ENCODE measurements at regions of chr9 and their contacts with region 1.

Region 1: DNA sequence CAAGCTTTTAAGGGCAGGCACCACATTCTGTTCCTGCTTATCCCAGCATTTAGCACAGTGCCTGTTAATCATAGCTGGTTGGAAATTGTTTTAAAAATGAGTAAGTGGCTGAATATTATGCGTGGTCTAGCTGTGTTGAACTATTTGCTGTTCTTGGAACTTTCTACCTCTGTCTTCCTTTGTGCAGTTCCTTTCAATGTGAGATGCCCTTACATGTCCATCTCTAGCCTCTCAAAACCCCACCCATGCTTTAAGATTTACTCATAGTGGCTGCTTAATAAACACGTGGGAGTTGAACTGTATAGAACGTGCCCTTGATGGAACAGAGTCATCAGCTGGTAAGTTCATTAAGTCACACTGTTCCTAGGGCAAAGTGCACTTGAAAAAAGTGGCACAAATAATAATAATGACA is 34.5 kb downstream of the C9orf57 start:
- DNase-seq: no peak
- H3K4me3 Mint-ChIP-seq: no peak overlapping the region
- H3K27ac Mint-ChIP-seq: no peak overlapping the region
- H3K4me1 Mint-ChIP-seq: peaks cover 5% of the 10 kb centered on the region
- H3K27me3 Mint-ChIP-seq: no peaks in the 10 kb centered on the region

Region 2: DNA sequence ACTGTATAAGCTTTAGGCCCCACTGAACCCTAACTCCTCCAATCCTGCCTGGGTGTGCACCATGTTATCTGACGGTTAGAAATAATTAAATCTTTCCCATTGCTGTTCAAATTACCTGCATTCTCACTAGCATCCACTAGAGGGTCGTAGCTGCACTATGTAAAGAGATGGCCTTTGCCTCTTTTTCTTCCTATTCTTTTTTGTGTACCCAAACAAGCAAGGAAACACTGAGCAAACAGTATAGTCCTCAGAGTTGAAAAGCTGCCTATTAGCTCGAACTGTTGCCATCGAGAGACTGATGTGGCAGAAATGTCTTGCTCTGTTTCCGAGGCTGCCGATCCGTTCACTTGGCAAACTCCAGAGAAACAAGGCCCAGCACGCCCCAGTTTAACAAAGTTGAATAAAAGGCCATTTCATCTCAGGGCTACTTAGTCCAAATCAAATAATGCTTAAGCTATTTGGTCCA is 740.7 kb before region 1 on chr9:
- intact Hi-C with region 1: loop called (anchors 2 kb)
- DNase-seq: peak; percentile 10
- H3K4me3 Mint-ChIP-seq: no peak overlapping the region
- H3K27ac Mint-ChIP-seq: no peak overlapping the region
- H3K4me1 Mint-ChIP-seq: no peaks in the 10 kb centered on the region
- H3K27me3 Mint-ChIP-seq: peaks cover 3% of the 10 kb centered on the region

Region 3: DNA sequence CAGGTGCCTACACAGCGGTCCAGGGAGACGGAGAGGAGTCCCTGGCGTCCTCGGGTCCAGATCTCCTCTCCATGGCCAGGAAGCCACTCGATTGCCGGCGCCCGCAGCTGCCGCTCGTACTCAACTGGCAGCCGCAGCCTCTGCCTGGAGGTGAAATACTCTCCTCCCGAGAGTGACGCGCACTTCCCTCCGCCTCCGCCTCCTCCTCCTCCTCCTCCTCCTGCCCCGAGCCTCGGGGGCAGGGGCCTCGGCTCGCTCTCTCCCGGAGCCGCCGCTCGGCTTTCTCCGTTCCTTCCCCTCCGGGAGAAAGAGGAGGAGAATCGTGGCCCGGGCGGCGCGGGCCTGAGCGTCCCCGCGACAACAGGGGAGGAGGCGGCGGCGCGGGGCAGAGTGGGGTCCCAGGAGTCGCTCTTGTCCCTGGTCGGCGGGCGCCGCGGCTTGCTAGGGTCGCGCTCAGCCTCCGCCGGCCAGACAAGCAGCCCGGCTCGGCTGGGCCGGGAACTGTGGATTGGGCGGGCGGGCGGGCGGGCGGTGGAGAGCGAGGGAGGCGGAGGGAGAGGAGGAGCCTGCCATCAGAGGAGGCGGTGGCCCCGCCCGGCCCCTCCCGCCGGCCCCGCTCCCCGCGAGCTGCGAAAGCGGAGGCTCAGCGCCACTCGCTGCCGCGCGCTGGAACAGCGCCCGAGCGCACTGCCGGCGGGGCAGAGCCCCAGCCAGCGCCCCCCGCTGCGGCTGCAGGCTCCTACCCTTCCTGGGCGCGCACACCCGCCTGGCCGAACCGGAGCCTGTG is 257.4 kb before region 1 on chr9 and contains the start of gene CEMIP2:
- intact Hi-C with region 1: no loop called
- DNase-seq: peak; percentile 84
- H3K4me3 Mint-ChIP-seq: peak within 1 kb of the TSS; percentile 96
- H3K27ac Mint-ChIP-seq: peak within 1 kb of the TSS; percentile 92
- H3K4me1 Mint-ChIP-seq: peaks cover 48% of the 10 kb centered on the region
- H3K27me3 Mint-ChIP-seq: no peaks in the 10 kb centered on the region
- total RNA-seq, gene CEMIP2: 70.0 and 79.1 TPM in 2 replicates

Region 4: DNA sequence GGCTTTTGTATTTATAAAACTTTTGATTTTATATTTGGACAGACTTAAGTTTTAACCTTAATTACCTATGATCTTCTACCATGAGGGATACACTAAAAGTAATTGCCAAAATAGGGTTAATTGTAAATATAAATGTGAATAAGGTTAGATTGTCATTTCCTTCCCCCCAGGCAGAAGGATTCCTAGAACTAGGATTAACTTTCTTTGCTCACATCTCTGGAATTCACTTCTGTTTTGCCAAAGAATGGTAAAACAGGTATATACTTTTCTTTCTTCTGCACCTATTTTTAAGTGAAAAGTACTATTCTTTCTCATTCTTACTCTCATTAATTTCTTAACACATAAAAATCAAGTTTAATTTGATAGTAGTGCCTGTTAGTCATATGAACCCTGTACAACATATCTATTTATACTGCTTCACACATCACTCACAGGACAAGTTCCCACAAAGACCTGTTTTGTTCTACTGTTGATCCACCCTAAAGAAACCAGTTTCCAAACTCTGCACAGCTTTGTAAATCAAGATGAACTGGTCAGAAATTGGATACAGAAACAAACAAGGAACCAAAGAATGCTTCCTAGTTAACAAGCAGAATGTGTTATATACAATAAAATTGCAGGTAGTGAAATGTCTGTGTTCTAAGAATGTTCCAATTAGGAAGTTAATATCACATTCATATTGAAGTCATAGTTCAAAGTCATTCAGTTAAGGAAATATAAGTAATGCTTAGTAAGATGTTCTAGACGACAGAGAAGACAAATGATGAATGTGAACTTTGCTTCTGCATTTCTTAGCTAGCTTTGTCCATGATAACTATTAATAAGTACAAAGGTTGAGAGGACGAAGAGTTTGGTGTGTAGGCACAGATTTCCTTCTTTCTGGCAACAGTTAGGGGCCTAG is 81.2 kb before region 1 on chr9:
- intact Hi-C with region 1: no loop called
- DNase-seq: no peak
- H3K4me3 Mint-ChIP-seq: no peak overlapping the region
- H3K27ac Mint-ChIP-seq: no peak overlapping the region
- H3K4me1 Mint-ChIP-seq: peaks cover 16% of the 10 kb centered on the region
- H3K27me3 Mint-ChIP-seq: no peaks in the 10 kb centered on the region

Region 5: GRCh38 chr9:72102520-72102919 is 76.6 kb after region 1 on chr9:
- intact Hi-C with region 1: no loop called
- DNase-seq: no peak
- H3K4me3 Mint-ChIP-seq: no peak overlapping the region
- H3K27ac Mint-ChIP-seq: no peak overlapping the region
- H3K4me1 Mint-ChIP-seq: no peaks in the 10 kb centered on the region
- H3K27me3 Mint-ChIP-seq: no peaks in the 10 kb centered on the region